ENCODE measurements at regions of chr1 and their contacts with region 1.

Region 1: GRCh38 chr1:97243973-97244560 is 522.5 kb downstream of the PTBP2 start:
- DNase-seq: no peak
- H3K4me3 ChIP-seq: no peak overlapping the region
- H3K27ac ChIP-seq: no peak overlapping the region
- H3K4me1 ChIP-seq: no peaks in the 10 kb centered on the region
- H3K27me3 ChIP-seq: no peaks in the 10 kb centered on the region
- CTCF ChIP-seq: peak in 1 of 3 donors; percentile 32
- POLR2A ChIP-seq: no peak

Region 2: DNA sequence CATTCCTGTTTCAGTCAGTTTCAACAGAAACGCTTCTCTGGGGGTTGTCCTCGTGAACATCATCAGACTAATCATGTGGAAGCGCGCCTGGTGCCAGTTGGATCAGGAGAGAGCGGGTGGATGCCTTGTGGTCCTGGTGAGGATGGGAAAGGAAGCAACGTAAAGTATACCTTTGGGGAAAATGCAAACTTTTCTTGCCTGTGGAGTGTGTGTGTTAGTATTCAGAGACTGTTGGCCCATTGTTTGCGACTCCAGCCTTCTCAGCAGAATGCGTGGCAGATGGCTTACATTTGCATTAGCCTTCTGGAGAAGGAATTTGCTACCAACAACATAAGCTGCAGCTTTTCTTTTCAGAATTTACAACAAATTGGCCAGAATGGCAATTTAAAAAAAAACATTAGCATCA is 1836.2 kb before region 1 on chr1:
- intact Hi-C with region 1: loop called (anchors 10 kb)
- DNase-seq: no peak
- H3K4me3 ChIP-seq: peak overlapping the region in 2 of 3 donors; percentile 10 to 37
- H3K27ac ChIP-seq: no peak overlapping the region
- H3K4me1 ChIP-seq: no peaks in the 10 kb centered on the region
- H3K27me3 ChIP-seq: no peaks in the 10 kb centered on the region
- CTCF ChIP-seq: no peak
- POLR2A ChIP-seq: no peak

Region 3: GRCh38 chr1:98048244-98048643 is 804.2 kb after region 1 on chr1:
- intact Hi-C with region 1: loop called (anchors 5 kb)
- DNase-seq: peak; percentile 35 to 78
- H3K4me3 ChIP-seq: peak overlapping the region in 1 of 3 donors; percentile 24
- H3K27ac ChIP-seq: no peak overlapping the region
- H3K4me1 ChIP-seq: peaks cover under 1 to 3% of the 10 kb centered on the region in 2 donors
- H3K27me3 ChIP-seq: peaks cover 0 to 54% of the 10 kb centered on the region in 2 donors
- CTCF ChIP-seq: no peak
- POLR2A ChIP-seq: no peak